T-cell (primary cell): ENCODE measurements at regions of chr6 and their contacts with region 1.

Region 1: DNA sequence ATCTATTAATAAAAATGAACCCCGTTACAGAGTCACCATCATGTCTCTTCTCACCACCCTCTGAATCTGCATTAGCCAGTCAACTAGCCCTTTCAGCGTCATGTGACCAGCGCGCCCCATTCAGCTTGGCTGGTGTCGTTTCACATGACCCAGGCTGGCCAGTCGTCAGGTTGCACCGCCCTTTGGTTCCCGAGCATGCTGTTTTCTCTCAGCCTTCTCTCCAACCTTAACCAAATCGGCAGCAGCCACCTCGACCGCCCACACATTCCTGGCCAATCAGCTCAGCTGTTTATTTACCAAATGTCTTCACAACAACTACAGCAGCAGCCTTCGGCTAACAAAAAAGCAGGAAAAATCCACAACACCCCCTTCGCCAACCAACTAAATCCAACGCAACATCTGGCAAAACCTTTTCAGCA is 5.6 kb downstream of the SRSF3 start:
- DNase-seq: peak in 34 of 35 experiments; percentile 27 to 70 (median 55)
- ATAC-seq: peak; percentile 35 to 72 (median 57)
- H3K4me3 ChIP-seq: peak overlapping the region; percentile 16 to 38
- H3K4me3 Mint-ChIP-seq: peak overlapping the region; percentile 90 to 96 (median 96)
- H3K27ac ChIP-seq: peak overlapping the region; percentile 98
- H3K27ac Mint-ChIP-seq: peak overlapping the region; percentile 82 to 86
- H3K4me1 ChIP-seq: peaks cover 51 to 71% of the 10 kb centered on the region in 2 experiments
- H3K4me1 Mint-ChIP-seq: peaks cover 76 to 80% (median 78%) of the 10 kb centered on the region in 3 donors
- H3K27me3 ChIP-seq: no peaks in the 10 kb centered on the region
- H3K27me3 Mint-ChIP-seq: no peaks in the 10 kb centered on the region

Region 2: GRCh38 chr6:36072681-36073080 is 527.1 kb before region 1 on chr6:
- CTCF ChIA-PET with region 1: no interaction called
- POLR2A ChIA-PET with region 1: interaction called in 1 of 2 experiments, 10 read pairs
- DNase-seq: no peak
- ATAC-seq: no peak
- H3K4me3 ChIP-seq: no peak overlapping the region
- H3K4me3 Mint-ChIP-seq: no peak overlapping the region
- H3K27ac ChIP-seq: no peak overlapping the region
- H3K27ac Mint-ChIP-seq: no peak overlapping the region
- H3K4me1 ChIP-seq: no peaks in the 10 kb centered on the region
- H3K4me1 Mint-ChIP-seq: peaks cover 25 to 45% (median 44%) of the 10 kb centered on the region in 3 donors
- H3K27me3 ChIP-seq: no peaks in the 10 kb centered on the region
- H3K27me3 Mint-ChIP-seq: no peaks in the 10 kb centered on the region

Region 3: DNA sequence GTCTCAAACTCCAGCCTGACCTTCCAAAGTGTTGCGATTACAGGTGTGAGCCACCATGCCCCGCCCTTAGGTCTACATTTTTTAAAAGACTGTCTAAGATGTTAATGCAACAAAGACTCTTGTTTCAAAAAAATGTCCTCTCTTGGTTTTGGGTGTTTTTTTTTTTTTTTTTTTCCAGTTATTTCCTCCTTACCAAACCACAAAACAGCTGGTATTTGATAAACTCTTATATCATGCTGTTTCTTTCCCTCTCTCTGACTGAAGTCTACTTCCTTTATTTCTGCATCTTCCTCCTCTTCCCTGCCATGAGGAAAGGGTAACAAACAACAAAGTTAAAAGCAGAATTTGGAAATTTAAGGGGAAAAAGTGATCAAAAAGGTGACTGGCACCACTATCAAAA is 73.7 kb before region 1 on chr6:
- CTCF ChIA-PET with region 1: no interaction called
- POLR2A ChIA-PET with region 1: interaction called, 6 to 12 read pairs
- DNase-seq: no peak
- ATAC-seq: no peak
- H3K4me3 ChIP-seq: no peak overlapping the region
- H3K4me3 Mint-ChIP-seq: peak overlapping the region in 1 of 3 donors; percentile 49
- H3K27ac ChIP-seq: no peak overlapping the region
- H3K27ac Mint-ChIP-seq: peak overlapping the region in 1 of 2 donors; percentile 7
- H3K4me1 ChIP-seq: peaks cover 8 to 21% of the 10 kb centered on the region in 2 experiments
- H3K4me1 Mint-ChIP-seq: peaks cover 52 to 63% (median 56%) of the 10 kb centered on the region in 3 donors
- H3K27me3 ChIP-seq: no peaks in the 10 kb centered on the region
- H3K27me3 Mint-ChIP-seq: no peaks in the 10 kb centered on the region